K562 (cell line): ENCODE measurements at regions of chr7 and their contacts with region 1.

Region 1: GRCh38 chr7:117212969-117213877 is 109.6 kb downstream of the WNT2 start:
- DNase-seq: peak; percentile 74 to 87 (median 84)
- ATAC-seq: peak; percentile 88
- H3K4me3 ChIP-seq: no peak overlapping the region
- H3K27ac ChIP-seq: no peak overlapping the region
- H3K4me1 ChIP-seq: peaks cover 3 to 20% of the 10 kb centered on the region in 2 experiments; a peak in 4 of 5 replicates
- H3K27me3 ChIP-seq: no peaks in the 10 kb centered on the region
- CTCF ChIP-seq: peak; percentile 84 to 97 (median 90)
- EP300 ChIP-seq: no peak
- POLR2A ChIP-seq: no peak
- RAD21 ChIP-seq: peak; percentile 77 to 83

Region 2: DNA sequence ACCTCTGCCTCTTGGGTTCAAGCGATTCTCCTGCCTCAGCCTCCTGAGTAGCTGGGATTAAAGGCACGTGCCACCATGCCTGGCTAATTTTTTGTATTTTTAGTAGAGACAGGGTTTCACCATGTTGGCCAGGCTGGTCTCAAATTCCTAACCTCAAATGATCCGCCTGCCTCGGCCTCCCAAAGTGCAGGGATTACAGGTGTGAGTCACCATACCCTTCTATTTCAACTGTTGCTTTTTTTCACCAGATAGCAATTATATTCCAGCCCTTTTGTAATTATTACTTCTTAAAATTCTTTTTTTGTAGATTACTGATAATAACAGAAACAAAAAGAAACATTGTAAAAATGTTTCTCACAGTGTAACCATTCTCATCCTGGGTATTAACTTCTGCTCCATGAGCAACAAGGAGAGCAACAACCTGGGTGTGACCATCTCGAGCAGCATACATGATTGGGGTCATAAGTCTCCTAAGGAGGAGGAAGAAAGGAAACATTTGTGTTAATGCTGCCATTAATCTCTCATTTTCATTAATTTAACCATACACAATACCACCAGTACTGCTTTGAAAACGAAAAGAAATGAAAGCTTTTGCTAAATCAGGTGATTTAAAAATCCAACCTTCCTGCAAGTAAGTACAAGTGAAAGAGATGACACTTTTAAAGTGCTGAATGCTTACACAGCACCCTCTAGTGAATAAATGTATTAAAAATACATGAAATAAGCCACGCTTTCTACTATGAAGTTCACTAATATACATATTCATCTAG is 172.3 kb after region 1 on chr7:
- CTCF ChIA-PET with region 1: no interaction called
- POLR2A ChIA-PET with region 1: no interaction called
- in situ Hi-C with region 1: no loop called
- intact Hi-C with region 1: loop called (anchors 2 kb)
- DNase-seq: no peak
- ATAC-seq: peak; percentile 78
- H3K4me3 ChIP-seq: no peak overlapping the region
- H3K27ac ChIP-seq: no peak overlapping the region
- H3K4me1 ChIP-seq: no peaks in the 10 kb centered on the region
- H3K27me3 ChIP-seq: no peaks in the 10 kb centered on the region
- CTCF ChIP-seq: peak in 2 of 3 experiments; percentile 19 to 53; a peak in 2 of 6 replicates
- EP300 ChIP-seq: no peak
- POLR2A ChIP-seq: no peak
- RAD21 ChIP-seq: peak; percentile 45 to 77; a peak in 3 of 4 replicates